Activated CD4-positive, alpha-beta T cell treated with anti-CD3 and anti-CD28 coated beads, Interleukin-2, amount 10 ng/mL, durations not matched to agents 7 days and 5 days (primary cell): ENCODE measurements at regions of chr1 and their contacts with region 1.

Region 1: GRCh38 chr1:39478126-39478915 is 13.1 kb upstream of the BMP8A start:
- DNase-seq: no peak
- H3K4me3 Mint-ChIP-seq: no peak overlapping the region
- H3K27ac Mint-ChIP-seq: peak overlapping the region; percentile 9
- H3K4me1 Mint-ChIP-seq: no peaks in the 10 kb centered on the region
- H3K27me3 Mint-ChIP-seq: no peaks in the 10 kb centered on the region

Region 2: DNA sequence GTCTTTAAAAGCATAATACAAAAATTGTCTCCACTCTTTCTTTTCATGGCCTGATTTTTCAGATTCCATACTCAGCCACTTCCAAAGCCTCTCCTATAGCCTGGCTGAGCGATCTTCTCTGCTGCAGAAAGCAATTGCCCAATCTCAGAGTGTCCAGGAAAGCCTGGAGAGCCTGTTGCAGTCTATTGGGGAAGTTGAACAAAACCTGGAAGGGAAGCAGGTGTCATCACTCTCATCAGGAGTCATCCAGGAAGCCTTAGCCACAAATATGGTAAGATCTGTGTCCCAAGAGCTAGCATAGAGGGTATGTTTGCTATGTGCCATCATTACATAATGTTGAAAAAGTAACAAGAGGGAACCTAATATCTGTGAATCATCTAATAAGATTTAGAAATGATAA is 117.6 kb before region 1 on chr1:
- CTCF ChIA-PET with region 1: no interaction called
- POLR2A ChIA-PET with region 1: no interaction called
- DNase-seq: no peak
- H3K4me3 Mint-ChIP-seq: no peak overlapping the region
- H3K27ac Mint-ChIP-seq: no peak overlapping the region
- H3K4me1 Mint-ChIP-seq: no peaks in the 10 kb centered on the region
- H3K27me3 Mint-ChIP-seq: no peaks in the 10 kb centered on the region

Region 3: DNA sequence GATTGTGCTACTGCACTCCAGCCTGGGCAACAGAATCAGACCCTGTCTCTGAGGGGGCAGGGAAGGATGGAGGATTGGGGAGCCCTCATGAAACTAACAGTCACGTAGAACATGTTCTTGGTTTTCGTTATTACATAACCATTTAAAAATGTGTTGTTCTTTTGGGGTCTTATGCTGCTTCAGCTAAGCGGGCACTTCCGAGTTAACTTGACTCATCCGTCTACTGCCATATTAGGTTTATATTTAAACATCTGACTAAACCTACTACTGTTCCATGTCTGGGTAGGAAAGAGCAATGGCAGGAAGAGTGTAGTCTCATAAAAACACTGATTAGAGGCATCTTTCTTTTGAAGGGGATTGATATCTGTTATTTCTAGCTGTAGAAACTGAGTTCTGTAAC is 46.4 kb before region 1 on chr1:
- CTCF ChIA-PET with region 1: no interaction called
- POLR2A ChIA-PET with region 1: interaction called, 12 read pairs
- DNase-seq: no peak
- H3K4me3 Mint-ChIP-seq: no peak overlapping the region
- H3K27ac Mint-ChIP-seq: no peak overlapping the region
- H3K4me1 Mint-ChIP-seq: no peaks in the 10 kb centered on the region
- H3K27me3 Mint-ChIP-seq: no peaks in the 10 kb centered on the region